Activated T-helper 1 cell treated with anti-CD3 and anti-CD28 coated beads, Interleukin-12 subunit alpha, Interleukin-12 subunit beta, Interleukin-2, Interleukin-4 antibody, amounts not matched to agents 30 ng/mL and 10 ng/mL and 1 ng/mL, durations not matched to agents 14 hours and 24 hours and 36 hours (primary cell): ENCODE measurements at regions of chr4 and their contacts with region 1.

Region 1: DNA sequence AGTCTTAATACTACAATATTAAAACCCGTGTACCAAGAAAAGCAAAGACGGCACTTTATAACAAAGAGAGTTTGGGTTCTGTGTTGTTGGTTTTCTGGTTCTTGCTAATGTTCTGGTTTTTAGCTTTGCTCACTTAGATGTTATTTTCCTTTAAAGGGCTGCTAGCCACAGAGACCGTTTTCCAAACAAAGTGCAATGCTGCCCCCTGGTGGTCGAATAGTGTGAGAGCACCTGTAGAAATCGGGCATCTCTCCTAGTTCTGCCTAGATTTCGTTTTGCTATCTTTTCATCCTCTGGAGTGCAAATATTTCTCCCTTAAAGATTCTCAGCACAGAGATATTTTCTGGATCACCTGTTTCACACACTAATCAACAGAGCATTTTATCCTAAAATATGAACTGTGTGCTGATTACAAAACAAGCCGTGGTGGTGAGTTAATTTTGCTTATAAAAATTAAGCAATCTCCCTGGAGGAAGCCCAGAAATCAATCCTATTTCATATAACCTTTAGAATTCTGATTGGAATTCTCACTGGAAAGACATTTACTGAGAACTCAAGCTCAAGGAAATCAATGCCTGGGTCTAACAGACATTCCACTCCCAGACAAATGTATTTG is 334.5 kb upstream of the NOCT start:
- DNase-seq: peak; percentile 50
- H3K4me3 Mint-ChIP-seq: no peak overlapping the region
- H3K27ac Mint-ChIP-seq: no peak overlapping the region
- H3K4me1 Mint-ChIP-seq: no peaks in the 10 kb centered on the region
- H3K27me3 Mint-ChIP-seq: peaks cover 15% of the 10 kb centered on the region

Region 2: GRCh38 chr4:136898590-136899248 is 1782.4 kb before region 1 on chr4:
- intact Hi-C with region 1: loop called (anchors 5 kb)
- DNase-seq: no peak
- H3K4me3 Mint-ChIP-seq: no peak overlapping the region
- H3K27ac Mint-ChIP-seq: no peak overlapping the region
- H3K4me1 Mint-ChIP-seq: no peaks in the 10 kb centered on the region
- H3K27me3 Mint-ChIP-seq: no peaks in the 10 kb centered on the region

Region 3: DNA sequence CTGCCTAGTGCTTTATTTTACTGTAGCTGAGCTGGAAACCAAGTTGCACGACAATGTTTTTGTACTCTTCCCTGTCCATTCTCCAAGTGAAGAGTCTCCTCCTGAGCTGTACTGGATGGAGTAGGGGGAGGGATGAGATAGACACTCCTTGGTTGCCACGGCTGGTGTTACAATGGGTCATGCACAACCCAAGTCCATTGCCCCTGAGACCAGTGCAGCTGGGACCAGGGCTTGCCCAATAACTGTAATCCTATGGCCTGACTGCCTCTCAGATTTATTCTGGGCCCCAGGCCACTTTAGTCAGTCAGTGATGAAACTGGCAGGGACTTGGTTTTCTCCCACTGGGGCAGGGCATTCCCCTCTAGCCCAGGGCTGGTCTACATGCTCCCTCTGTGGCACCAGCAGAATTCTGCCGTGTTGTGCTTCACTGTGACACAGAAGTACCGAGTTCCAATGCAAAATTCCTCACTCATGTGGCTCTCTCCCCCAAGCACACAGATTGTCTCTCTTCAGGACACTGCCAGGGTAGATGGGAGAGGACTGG is 945.5 kb before region 1 on chr4:
- intact Hi-C with region 1: loop called (anchors 2 kb)
- DNase-seq: no peak
- H3K4me3 Mint-ChIP-seq: no peak overlapping the region
- H3K27ac Mint-ChIP-seq: no peak overlapping the region
- H3K4me1 Mint-ChIP-seq: no peaks in the 10 kb centered on the region
- H3K27me3 Mint-ChIP-seq: no peaks in the 10 kb centered on the region

Region 4: DNA sequence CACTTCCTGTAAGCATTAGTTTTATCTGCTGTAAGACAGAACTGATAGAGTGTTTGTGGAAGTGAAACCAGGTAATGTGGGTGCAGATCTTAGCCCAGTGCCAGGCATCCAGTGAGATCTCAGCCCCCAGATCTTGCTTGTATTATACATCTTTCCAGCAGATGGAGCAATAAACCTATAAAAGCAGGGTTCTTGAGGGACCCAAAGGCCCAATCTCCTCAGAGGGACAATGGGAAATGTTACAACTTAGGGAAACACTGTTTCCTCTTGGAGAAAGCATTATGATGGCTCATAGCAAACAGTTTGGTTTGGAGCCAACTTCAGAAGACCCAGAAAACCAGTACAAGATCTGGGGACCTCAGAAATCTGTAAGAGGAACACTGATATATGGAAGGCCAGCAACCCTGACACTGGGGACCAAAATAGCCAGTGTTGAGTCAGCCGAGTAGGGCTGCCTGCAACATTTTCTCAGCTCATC is 645.3 kb before region 1 on chr4:
- intact Hi-C with region 1: loop called (anchors 1 kb)
- DNase-seq: no peak
- H3K4me3 Mint-ChIP-seq: no peak overlapping the region
- H3K27ac Mint-ChIP-seq: no peak overlapping the region
- H3K4me1 Mint-ChIP-seq: no peaks in the 10 kb centered on the region
- H3K27me3 Mint-ChIP-seq: no peaks in the 10 kb centered on the region

Region 5: DNA sequence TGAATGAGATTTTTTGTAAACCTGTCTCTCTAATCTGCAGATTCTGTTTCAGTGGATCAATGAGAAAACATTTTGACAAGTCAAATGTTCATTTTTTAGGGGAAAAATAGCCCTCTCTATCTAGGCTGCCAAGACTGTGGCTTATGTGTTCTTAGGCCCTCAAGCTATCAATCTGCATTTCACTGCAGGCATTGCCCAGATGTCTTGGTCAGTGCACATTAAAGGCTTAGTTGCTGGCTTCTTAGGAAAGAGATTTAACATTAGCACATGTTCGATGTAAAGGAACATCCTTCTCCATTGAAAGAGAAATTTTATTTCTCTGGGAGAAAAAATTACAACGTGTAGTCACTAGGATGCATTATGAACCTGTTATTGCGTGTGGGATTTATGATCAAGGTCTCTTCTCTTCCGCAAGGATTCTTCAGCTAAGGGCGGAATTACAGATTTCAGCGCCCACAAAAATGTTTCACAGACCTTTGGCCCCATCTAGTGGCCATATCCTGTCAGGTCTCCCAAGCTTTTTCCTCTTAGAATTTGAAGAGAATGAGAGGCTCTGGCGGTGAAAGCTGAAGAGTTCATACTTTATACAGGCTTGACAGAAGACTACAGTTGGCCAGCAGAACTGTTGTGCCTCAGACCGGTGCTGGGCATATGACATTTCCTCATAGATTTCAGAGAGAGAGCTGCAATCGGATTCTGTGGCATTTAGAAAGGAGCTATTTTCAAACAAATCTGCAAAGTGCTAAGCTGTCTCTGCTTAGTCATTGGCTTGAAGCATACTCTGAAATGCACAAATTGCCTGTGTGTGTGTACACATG is 189.8 kb after region 1 on chr4:
- intact Hi-C with region 1: loop called (anchors 1 kb)
- DNase-seq: peak; percentile 7
- H3K4me3 Mint-ChIP-seq: no peak overlapping the region
- H3K27ac Mint-ChIP-seq: no peak overlapping the region
- H3K4me1 Mint-ChIP-seq: no peaks in the 10 kb centered on the region
- H3K27me3 Mint-ChIP-seq: peaks cover 12% of the 10 kb centered on the region